Astrocyte of the cerebellum (primary cell): ENCODE measurements at regions of chr14 and their contacts with region 1.

Region 1: DNA sequence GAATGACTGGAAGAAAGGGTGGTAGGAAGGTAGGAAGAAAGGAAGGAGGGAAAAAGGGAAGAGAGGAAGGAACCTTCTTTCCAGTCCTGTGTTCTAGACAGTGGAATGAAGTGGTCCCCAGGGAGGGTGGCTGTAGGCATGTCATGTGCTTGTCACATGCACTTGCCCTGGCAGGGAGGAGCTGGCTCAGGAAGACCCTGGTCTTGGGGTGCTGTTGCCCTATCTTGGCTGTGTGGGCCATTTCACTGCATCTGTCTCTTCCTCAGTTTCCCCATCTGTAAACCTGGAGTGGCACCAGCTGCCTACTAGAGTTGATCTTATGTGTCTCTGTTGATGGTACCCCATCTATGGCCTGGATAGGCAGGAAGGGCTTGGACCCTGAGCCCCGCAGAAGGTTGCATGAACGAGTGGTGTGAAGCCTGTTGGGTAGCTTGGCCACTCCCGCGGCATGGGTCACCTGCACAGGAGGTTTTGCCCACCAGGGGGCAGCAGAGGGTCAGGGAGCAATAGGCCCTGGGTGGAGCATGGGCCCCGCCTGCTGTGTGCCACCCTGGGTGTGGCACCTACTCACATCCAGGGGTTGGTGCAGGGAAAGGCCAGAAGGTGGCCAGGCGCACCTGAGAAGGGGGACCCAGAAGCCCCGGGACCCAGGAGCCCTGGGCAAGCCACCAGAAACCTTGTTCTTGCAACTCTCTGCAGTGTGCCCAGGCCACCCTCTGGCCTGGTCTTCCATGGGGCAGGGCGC is 25.1 kb downstream of the MEG3 start:
- DNase-seq: no peak
- H3K4me3 ChIP-seq: no peak overlapping the region
- CTCF ChIP-seq: peak; percentile 54

Region 2: DNA sequence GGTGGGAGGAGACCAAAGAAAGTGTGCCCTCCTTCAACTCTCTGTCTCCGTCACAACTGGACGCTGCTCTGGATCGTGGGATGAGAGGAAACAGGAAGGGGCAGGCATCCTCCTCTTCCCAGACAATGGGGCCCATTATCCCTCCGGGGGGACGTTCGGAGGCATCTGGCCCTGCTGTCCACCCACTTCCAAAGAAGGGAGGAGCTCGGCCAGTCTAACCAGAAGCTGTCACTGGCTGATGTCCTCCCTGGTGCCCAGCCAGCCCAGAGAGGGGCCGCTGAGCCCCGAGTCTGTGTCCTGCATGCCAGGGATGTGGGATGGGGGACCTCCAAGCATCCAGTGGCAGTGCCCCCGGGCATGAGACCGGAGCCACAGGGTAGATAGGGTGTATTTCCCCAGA is 64.9 kb before region 1 on chr14:
- in situ Hi-C with region 1: loop called (anchors 5 kb)
- DNase-seq: no peak
- H3K4me3 ChIP-seq: no peak overlapping the region
- CTCF ChIP-seq: no peak

Region 3: GRCh38 chr14:100904307-100905087 is 53.5 kb after region 1 on chr14:
- in situ Hi-C with region 1: loop called (anchors 5 kb)
- DNase-seq: no peak
- H3K4me3 ChIP-seq: no peak overlapping the region
- CTCF ChIP-seq: peak; percentile 40